BJ (cell line): ENCODE measurements at regions of chr15 and their contacts with region 1.

Region 1: GRCh38 chr15:75347222-75347878 is 511 bp downstream of the NEIL1 start:
- DNase-seq: no peak
- H3K4me3 ChIP-seq: peak overlapping the region; percentile 82
- H3K27me3 ChIP-seq: peaks cover 12% of the 10 kb centered on the region
- CTCF ChIP-seq: no peak

Region 2: GRCh38 chr15:75631935-75632334 is 284.6 kb after region 1 on chr15:
- CTCF ChIA-PET with region 1: no interaction called
- POLR2A ChIA-PET with region 1: interaction called, 15 read pairs
- DNase-seq: no peak
- H3K4me3 ChIP-seq: no peak overlapping the region
- H3K27me3 ChIP-seq: no peaks in the 10 kb centered on the region
- CTCF ChIP-seq: no peak